MCF 10A (cell line): ENCODE measurements at regions of chr1 and their contacts with region 1.

Region 1: DNA sequence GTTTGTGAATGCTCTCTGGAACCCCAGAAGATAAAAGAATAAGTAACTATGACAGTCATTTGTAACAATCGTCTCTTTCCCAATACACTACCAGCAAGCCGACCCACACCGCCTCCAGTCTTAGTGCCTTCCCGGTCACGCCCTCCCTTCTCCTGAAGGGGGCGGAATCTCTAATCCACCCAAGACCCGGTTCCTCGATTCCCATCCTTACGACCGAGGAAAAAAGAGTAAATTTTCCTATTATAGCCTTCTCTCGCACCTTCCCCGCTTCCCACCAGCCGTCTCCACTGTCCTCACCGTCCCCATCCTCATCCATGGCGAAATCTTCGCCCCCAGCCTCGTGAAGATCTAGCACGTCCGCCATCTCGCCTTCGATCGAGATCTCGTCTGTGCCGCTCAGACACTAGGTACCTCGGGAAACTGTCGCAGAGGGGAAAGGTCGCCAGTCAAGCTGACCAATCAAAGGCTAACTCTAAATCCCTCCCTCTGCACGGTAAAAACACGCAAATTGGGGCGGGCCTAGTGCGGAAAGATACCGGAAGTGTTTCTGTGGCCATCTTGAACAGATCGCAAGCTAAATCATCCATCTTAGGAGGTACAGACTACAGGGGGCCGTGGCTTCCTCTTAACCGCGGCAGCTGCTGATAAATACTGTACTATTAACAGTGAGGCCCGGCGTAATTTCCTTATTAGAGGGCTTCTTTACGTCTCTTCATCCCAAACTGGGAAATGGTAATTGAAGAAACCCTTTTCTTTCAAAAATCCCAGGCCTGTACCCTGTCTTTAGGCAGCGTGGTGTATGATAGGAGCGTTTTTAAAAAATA is at the start of gene RBM8A:
- DNase-seq: peak; percentile 100
- H3K4me3 Mint-ChIP-seq: no peak within 1 kb of the TSS
- H3K27ac Mint-ChIP-seq: no peak within 1 kb of the TSS
- H3K4me1 Mint-ChIP-seq: peaks cover 14% of the 10 kb centered on the region
- H3K27me3 Mint-ChIP-seq: no peaks in the 10 kb centered on the region
- CTCF ChIP-seq: peak; percentile 76
- total RNA-seq, gene RBM8A: 370 and 403 TPM in 2 replicates

Region 2: DNA sequence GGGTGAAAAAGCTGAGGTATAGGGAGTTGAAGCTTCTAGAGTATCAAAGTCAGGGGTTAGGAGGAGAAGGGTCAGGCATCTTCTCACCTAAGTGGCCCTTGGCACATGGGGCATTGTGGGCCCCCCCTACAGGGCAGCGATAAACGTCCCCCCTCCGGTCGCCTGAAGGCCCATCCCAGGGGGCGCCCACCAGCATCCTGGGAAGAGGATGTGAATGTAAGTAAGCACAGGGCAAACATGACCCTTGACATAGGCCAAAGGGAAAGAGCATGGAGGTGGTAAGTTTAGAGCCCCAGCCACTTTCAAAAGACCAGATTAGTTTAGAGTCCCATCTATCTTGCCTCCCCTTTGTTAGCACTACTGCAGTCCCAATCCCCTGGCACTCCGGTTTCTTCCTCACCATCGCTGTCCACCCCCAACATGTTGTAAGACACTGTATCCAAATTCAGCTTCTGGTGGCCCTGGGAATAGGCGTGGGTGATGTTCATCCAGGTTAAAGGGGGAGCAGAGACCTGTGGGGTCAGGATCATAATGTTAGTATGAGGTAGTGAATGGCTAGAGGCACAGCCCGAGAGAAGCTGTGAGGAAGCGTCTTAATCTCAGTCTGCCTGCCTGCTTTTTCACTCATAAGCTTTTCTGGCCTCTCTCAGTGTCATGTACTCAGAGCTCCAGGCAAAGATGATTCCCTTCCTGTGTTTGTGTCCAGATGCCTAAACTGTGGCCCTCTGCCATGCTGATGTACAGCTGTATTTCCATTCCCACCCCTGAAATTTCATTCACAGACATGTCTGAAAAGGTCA is 20.1 kb before region 1 on chr1:
- CTCF ChIA-PET with region 1: interaction called, 26 read pairs
- POLR2A ChIA-PET with region 1: interaction called, 21 read pairs
- intact Hi-C with region 1: no loop called
- DNase-seq: no peak
- H3K4me3 Mint-ChIP-seq: no peak overlapping the region
- H3K27ac Mint-ChIP-seq: peak overlapping the region; percentile 57
- H3K4me1 Mint-ChIP-seq: peaks cover 24% of the 10 kb centered on the region
- H3K27me3 Mint-ChIP-seq: no peaks in the 10 kb centered on the region
- CTCF ChIP-seq: no peak

Region 3: DNA sequence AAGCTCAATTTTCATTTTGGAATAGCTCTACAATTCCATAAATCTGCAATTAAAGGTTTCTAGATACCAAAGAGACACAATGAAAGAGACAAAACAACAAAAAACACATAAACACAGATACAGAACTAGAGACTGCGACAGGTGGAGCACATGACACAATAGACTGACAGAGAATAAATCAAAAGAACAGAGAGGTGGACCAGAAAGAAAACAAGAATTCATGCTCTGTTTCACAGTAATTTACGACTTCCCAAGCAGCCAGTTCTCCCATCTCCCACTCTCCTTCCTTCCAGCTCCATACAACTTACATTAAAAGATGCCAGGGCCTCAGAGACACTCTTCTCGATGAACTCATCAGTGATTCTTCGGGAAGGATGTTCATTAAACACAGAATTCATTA is 15.1 kb after region 1 on chr1:
- CTCF ChIA-PET with region 1: interaction called, 10 read pairs
- POLR2A ChIA-PET with region 1: interaction called, 37 read pairs
- intact Hi-C with region 1: no loop called
- DNase-seq: no peak
- H3K4me3 Mint-ChIP-seq: no peak overlapping the region
- H3K27ac Mint-ChIP-seq: no peak overlapping the region
- H3K4me1 Mint-ChIP-seq: no peaks in the 10 kb centered on the region
- H3K27me3 Mint-ChIP-seq: no peaks in the 10 kb centered on the region
- CTCF ChIP-seq: no peak

Region 4: GRCh38 chr1:145951526-145951925 is 24.3 kb after region 1 on chr1:
- CTCF ChIA-PET with region 1: interaction called, 4 read pairs
- POLR2A ChIA-PET with region 1: interaction called, 136 read pairs
- intact Hi-C with region 1: no loop called
- DNase-seq: no peak
- H3K4me3 Mint-ChIP-seq: no peak overlapping the region
- H3K27ac Mint-ChIP-seq: no peak overlapping the region
- H3K4me1 Mint-ChIP-seq: peaks cover 30% of the 10 kb centered on the region
- H3K27me3 Mint-ChIP-seq: no peaks in the 10 kb centered on the region
- CTCF ChIP-seq: no peak

Region 5: GRCh38 chr1:147225193-147225730 is 1298.0 kb after region 1 on chr1 and contains the start of gene FMO5:
- CTCF ChIA-PET with region 1: no interaction called
- POLR2A ChIA-PET with region 1: no interaction called
- intact Hi-C with region 1: no loop called
- DNase-seq: peak; percentile 55
- H3K4me3 Mint-ChIP-seq: peak within 1 kb of the TSS; percentile 78
- H3K27ac Mint-ChIP-seq: peak within 1 kb of the TSS; percentile 94
- H3K4me1 Mint-ChIP-seq: peaks cover 10% of the 10 kb centered on the region
- H3K27me3 Mint-ChIP-seq: no peaks in the 10 kb centered on the region
- CTCF ChIP-seq: no peak
- total RNA-seq, gene FMO5: 0.72 and 0.86 TPM in 2 replicates